Posterior vena cava (tissue), 2 donors: ENCODE measurements at regions of chr9 and their contacts with region 1.

Region 1: GRCh38 chr9:35664531-35665470 is at the start of gene ARHGEF39:
- DNase-seq: peak; percentile 93
- total RNA-seq, gene ARHGEF39: 0.29 to 0.46 TPM

Region 2: GRCh38 chr9:35690431-35691333 is 25.9 kb after region 1 on chr9:
- intact Hi-C with region 1: loop called in 1 of 2 experiments (anchors 2 kb)
- DNase-seq: peak; percentile 94

Region 3: GRCh38 chr9:35729700-35730485 is 65.1 kb after region 1 on chr9:
- intact Hi-C with region 1: loop called in 1 of 2 experiments (anchors 5 kb)
- DNase-seq: peak; percentile 89

Region 4: GRCh38 chr9:35814841-35815543 is 150.2 kb after region 1 on chr9 and contains the start of gene HINT2:
- intact Hi-C with region 1: loop called in 1 of 2 experiments (anchors 10 kb)
- DNase-seq: peak; percentile 98
- total RNA-seq, gene HINT2: 20.0 to 26.8 TPM